Activated naive CD4-positive, alpha-beta T cell treated with anti-CD3 and anti-CD28 coated beads for 36 hours (primary cell): ENCODE measurements at regions of chr6 and their contacts with region 1.

Region 1: GRCh38 chr6:14734416-14735340 is 511.2 kb upstream of the JARID2 start:
- DNase-seq: peak; percentile 74
- H3K4me3 Mint-ChIP-seq: peak overlapping the region; percentile 54
- H3K27ac Mint-ChIP-seq: peak overlapping the region; percentile 96
- H3K4me1 Mint-ChIP-seq: peaks cover 97% of the 10 kb centered on the region
- H3K27me3 Mint-ChIP-seq: no peaks in the 10 kb centered on the region

Region 2: DNA sequence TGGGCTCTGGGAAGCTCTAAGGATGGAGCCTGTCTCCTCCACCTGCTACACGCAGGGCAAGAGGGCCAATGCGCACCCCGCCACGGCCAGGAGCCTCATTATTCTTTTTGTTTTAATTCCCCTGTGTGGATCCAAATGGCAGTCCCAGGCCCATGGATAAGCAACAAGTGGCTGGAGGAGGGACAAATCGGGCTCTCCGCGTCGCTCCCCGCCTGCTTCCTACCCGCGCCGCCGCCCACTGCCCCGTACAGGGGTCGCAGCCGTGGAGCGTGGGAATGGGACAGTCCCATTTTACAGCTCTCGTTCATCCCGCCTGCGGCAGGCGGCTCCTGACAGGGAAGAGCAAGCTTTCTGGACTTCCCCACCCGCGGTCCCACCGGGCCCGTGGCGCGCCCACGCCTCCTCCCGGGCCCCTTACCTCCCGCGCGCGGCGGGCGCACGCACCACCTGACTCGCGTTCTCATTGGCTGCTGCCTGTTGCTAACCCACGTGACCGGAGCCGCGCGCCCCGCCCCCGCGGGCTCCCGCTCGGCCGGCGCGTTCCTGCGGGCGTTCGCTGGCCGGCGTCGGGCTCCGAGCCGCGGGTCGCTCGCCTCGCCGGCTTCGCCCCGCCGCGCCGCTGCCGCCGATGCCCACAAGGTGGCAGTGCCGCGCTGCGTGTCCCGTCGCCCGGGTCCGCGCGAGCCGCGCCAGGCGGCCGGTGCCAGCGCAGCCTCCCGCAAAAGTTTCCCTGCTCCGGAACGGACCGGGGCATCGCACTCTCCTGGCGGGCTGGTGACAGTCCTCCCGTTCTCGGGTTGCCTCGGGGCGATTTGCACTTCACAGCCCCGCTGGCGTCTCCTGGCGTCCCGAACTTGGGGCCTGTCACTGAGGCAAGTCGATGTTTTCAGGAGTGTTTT is 523.8 kb before region 1 on chr6:
- CTCF ChIA-PET with region 1: no interaction called
- intact Hi-C with region 1: loop called (anchors 1 kb)
- DNase-seq: peak; percentile 88
- H3K4me3 Mint-ChIP-seq: peak overlapping the region; percentile 79
- H3K27ac Mint-ChIP-seq: peak overlapping the region; percentile 71
- H3K4me1 Mint-ChIP-seq: peaks cover 12% of the 10 kb centered on the region
- H3K27me3 Mint-ChIP-seq: no peaks in the 10 kb centered on the region

Region 3: DNA sequence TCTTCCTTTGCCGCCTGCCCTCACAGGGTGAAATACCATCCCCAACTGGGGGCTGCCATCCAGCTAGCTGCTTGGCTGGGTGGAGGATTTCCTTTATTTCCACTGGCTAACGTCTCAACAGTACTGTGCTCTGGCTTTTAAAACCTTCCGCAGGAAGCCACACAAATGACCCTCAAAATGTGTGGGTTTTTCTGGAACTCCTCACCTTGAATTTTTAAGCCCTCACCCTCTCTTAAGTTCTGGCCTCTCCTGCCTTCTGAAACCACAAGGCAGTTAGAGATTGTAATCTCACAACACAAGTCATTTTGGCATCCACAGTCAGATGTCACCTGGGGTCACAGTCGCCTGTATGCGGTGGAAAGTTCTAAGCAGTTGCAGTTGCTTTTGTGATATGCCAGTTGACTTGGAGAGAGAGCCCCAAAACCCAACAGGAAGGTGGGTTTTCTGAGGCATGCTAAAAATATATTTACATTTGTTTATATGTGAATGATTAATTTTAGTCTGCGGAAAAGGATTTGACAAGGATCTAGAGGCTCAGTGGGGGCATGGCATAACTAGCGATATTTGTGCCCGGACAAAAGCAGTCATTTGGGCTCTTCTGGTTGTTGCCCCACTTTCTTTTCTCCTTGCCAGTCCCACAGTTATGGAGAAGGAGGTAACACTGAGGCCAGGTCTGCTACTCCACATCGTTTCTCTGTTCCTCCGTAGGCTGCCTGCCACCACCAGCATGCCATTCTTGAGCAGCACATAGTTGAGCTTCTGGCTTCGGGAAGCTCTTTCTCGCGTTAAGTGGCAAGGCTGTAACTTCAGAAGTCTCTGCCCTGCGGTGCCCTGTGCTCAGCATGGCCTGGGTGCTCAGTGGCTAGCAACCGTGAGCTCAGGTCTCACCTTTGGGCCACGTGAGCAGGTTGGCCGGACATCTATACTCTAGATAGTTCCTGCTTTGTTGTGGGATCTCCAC is 281.8 kb before region 1 on chr6:
- CTCF ChIA-PET with region 1: no interaction called
- intact Hi-C with region 1: loop called (anchors 1 kb)
- DNase-seq: peak; percentile 79
- H3K4me3 Mint-ChIP-seq: no peak overlapping the region
- H3K27ac Mint-ChIP-seq: no peak overlapping the region
- H3K4me1 Mint-ChIP-seq: peaks cover 53% of the 10 kb centered on the region
- H3K27me3 Mint-ChIP-seq: peaks cover 1% of the 10 kb centered on the region

Region 4: GRCh38 chr6:14674458-14674857 is 60.2 kb before region 1 on chr6:
- CTCF ChIA-PET with region 1: no interaction called
- intact Hi-C with region 1: loop called (anchors 1 kb)
- DNase-seq: peak; percentile 12
- H3K4me3 Mint-ChIP-seq: no peak overlapping the region
- H3K27ac Mint-ChIP-seq: peak overlapping the region; percentile 80
- H3K4me1 Mint-ChIP-seq: peaks cover 19% of the 10 kb centered on the region
- H3K27me3 Mint-ChIP-seq: no peaks in the 10 kb centered on the region

Region 5: DNA sequence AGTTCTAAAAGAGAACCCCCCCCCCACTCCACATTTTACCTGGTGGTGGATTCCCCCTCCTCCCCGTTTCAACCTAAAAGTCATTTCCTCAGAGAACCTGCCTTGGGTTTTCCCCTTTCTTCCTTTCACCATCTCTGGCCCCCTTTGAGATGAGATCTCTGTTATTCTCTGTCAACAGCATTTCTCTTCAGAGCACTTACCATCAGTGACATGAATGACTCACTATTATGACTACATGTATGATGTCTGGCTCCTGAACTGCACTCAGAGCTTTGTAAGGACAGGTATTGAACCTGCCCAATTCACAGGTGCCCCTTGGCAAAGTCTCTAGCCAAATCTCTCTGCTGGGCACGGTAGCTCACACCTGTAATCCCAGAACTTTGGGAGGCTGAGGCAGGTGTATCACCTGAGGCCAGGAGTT is 449.8 kb after region 1 on chr6:
- CTCF ChIA-PET with region 1: no interaction called
- intact Hi-C with region 1: loop called (anchors 1 kb)
- DNase-seq: peak; percentile 78
- H3K4me3 Mint-ChIP-seq: no peak overlapping the region
- H3K27ac Mint-ChIP-seq: peak overlapping the region; percentile 99
- H3K4me1 Mint-ChIP-seq: peaks cover 25% of the 10 kb centered on the region
- H3K27me3 Mint-ChIP-seq: no peaks in the 10 kb centered on the region

Region 6: GRCh38 chr6:15429141-15430110 is 694.7 kb after region 1 on chr6:
- CTCF ChIA-PET with region 1: no interaction called
- intact Hi-C with region 1: loop called (anchors 2 kb)
- DNase-seq: no peak
- H3K4me3 Mint-ChIP-seq: no peak overlapping the region
- H3K27ac Mint-ChIP-seq: no peak overlapping the region
- H3K4me1 Mint-ChIP-seq: peaks cover 76% of the 10 kb centered on the region
- H3K27me3 Mint-ChIP-seq: no peaks in the 10 kb centered on the region